ENCODE measurements at regions of chr6 and their contacts with region 1.

Region 1: GRCh38 chr6:36594029-36594815 is at the start of gene SRSF3:
- DNase-seq: peak; percentile 99
- H3K4me3 ChIP-seq: peak within 1 kb of the TSS; percentile 75 to 85 (median 78)
- H3K27ac ChIP-seq: peak within 1 kb of the TSS; percentile 92 to 99 (median 96)
- H3K4me1 ChIP-seq: peaks cover 35 to 46% (median 41%) of the 10 kb centered on the region in 4 donors
- H3K27me3 ChIP-seq: no peaks in the 10 kb centered on the region
- CTCF ChIP-seq: peak; percentile 30 to 57 (median 53)
- EP300 ChIP-seq: no peak
- POLR2A ChIP-seq: peak; percentile 100
- total RNA-seq, gene SRSF3: 149 to 226 (median 180) TPM

Region 2: DNA sequence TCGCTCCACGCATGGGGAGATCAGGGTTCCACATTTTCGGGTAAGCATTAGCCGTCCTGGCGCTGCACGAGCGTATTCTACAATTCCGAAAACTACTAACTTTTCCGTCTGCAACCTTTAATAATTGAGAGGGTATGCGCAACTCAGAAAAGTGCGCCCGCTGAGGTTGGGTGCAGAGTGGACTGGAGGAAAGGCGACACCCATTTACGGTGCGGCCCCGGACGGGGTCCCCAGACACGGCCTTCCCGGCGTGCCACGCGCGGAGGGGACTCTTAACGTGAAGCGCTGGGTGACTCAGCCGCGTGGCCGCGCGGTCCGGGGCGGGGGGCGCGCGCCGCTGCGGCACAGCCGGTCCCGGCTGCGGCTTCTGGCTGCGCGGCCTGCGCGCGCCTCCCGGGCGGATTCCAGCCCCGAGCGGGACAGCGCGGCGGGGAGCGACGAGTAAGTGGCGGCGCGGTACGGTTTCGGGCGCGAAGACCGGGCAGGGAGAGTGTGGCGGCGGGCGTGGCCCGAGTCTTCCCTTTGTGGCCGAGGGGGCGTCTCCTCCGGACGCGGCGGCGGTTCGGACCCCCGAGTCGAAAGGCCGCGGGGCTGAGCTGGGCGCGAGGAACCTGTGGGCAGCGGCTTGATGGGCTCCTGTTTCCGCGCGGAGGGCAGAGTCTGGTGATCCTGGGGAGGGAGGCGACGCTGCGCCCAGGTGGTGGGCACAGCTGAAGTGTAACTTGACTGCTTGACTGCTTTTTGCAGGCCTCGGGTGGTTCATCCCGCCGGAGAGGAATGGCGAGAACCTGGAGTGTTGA is 151.4 kb before region 1 on chr6 and contains the starts of genes KCTD20 and PXT1:
- intact Hi-C with region 1: loop called (anchors 5 kb)
- DNase-seq: peak; percentile 96
- H3K4me3 ChIP-seq: peak within 1 kb of the TSS; percentile 95 to 99 (median 96)
- H3K27ac ChIP-seq: peak within 1 kb of the TSS; percentile 96 to 100 (median 98)
- H3K4me1 ChIP-seq: peaks cover 34 to 57% (median 49%) of the 10 kb centered on the region in 4 donors
- H3K27me3 ChIP-seq: no peaks in the 10 kb centered on the region
- CTCF ChIP-seq: peak in 1 of 3 experiments; percentile 12
- EP300 ChIP-seq: no peak
- POLR2A ChIP-seq: peak; percentile 58
- total RNA-seq, gene KCTD20: 47.3 to 78.2 (median 63.0) TPM
- total RNA-seq, gene PXT1: not detected

Measured in esophagus muscularis mucosa (tissue), 4 donors.